CD8-positive, alpha-beta T cell (primary cell): ENCODE measurements at regions of chr16 and their contacts with region 1.

Region 1: DNA sequence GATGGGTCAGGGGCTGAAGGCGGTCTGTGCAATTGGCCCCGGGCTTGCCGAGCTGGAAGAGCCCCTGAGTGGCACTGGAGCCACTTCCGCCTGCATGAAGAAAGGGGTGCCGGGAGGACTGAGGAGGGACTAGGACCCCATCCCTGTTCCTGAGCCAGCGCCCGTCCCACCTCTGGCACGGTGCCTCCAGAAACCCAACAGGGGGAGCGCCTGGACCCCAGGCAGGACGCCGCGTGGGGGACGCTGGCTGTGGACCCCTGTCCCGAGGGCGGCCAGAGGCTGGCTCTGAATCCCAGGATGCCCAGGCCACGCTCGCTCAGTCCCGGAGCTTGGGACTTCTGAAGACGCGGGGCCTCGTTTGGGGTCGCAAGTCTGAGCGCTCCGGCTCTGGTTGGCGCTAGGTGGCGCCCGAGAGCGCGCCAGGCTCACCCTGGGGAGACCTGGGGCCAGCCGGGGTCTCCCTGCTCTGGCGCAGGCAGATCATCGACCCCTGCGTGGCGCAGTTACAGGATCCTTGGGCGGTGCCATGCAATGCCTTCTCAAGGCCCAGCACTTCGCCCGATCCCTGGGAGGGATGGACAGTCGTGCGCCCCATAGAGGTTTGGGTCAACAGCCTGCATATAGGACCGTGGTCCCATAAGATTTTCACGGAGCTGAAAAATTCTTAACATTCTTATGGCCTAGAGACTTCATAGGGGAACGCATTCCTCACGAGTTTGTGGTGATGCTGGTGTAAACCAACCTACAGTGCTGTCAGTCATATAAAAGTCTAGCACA is 58.5 kb upstream of the CREBBP start:
- DNase-seq: peak; percentile 33 to 83 (median 67)
- ATAC-seq: peak; percentile 91
- H3K4me3 ChIP-seq: peak overlapping the region; percentile 17 to 33
- H3K4me3 Mint-ChIP-seq: no peak overlapping the region
- H3K27ac ChIP-seq: no peak overlapping the region
- H3K27ac Mint-ChIP-seq: no peak overlapping the region
- H3K4me1 ChIP-seq: peaks cover 13% of the 10 kb centered on the region
- H3K4me1 Mint-ChIP-seq: peaks cover 4% of the 10 kb centered on the region
- H3K27me3 ChIP-seq: peaks cover 0 to 5% of the 10 kb centered on the region in 2 experiments
- H3K27me3 Mint-ChIP-seq: peaks cover 3% of the 10 kb centered on the region
- CTCF ChIP-seq: peak; percentile 87

Region 2: GRCh38 chr16:3822366-3823045 is 116.5 kb before region 1 on chr16:
- CTCF ChIA-PET with region 1: no interaction called
- POLR2A ChIA-PET with region 1: no interaction called
- intact Hi-C with region 1: no loop called
- DNase-seq: peak in 1 of 9 experiments; percentile 18
- ATAC-seq: no peak
- H3K4me3 ChIP-seq: peak overlapping the region in 1 of 2 experiments; percentile 17
- H3K4me3 Mint-ChIP-seq: peak overlapping the region; percentile 55
- H3K27ac ChIP-seq: no peak overlapping the region
- H3K27ac Mint-ChIP-seq: no peak overlapping the region
- H3K4me1 ChIP-seq: peaks cover 91% of the 10 kb centered on the region
- H3K4me1 Mint-ChIP-seq: peaks cover 96% of the 10 kb centered on the region
- H3K27me3 ChIP-seq: no peaks in the 10 kb centered on the region
- H3K27me3 Mint-ChIP-seq: no peaks in the 10 kb centered on the region
- CTCF ChIP-seq: no peak

Region 3: DNA sequence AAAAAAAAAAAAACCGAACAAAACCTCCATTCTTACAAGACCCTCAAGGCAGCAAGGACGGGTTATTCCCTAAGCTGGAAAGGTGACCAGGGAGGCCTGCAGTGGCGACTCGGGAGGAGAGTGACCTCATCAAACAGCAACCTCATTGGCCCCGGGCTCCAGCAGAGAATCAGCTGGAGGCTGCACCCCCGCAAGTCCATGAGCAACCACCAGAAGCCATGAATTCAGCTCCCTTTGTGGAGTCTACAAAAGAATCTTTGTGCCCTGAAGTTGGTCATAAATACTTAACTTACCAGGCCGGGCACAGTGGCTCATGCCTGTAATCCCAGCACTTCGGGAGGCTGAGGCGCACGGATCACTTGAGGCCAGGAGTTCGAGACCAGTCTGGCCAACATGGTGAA is 22.4 kb after region 1 on chr16:
- CTCF ChIA-PET with region 1: interaction called, 7 read pairs
- POLR2A ChIA-PET with region 1: no interaction called
- intact Hi-C with region 1: loop called in 1 of 2 experiments (anchors 1 kb)
- DNase-seq: no peak
- ATAC-seq: no peak
- H3K4me3 ChIP-seq: no peak overlapping the region
- H3K4me3 Mint-ChIP-seq: peak overlapping the region; percentile 83
- H3K27ac ChIP-seq: no peak overlapping the region
- H3K27ac Mint-ChIP-seq: no peak overlapping the region
- H3K4me1 ChIP-seq: peaks cover 18% of the 10 kb centered on the region
- H3K4me1 Mint-ChIP-seq: peaks cover 20% of the 10 kb centered on the region
- H3K27me3 ChIP-seq: peaks cover 0 to 4% of the 10 kb centered on the region in 2 experiments
- H3K27me3 Mint-ChIP-seq: peaks cover 10% of the 10 kb centered on the region
- CTCF ChIP-seq: no peak

Region 4: GRCh38 chr16:3983081-3983520 is 44.1 kb after region 1 on chr16:
- CTCF ChIA-PET with region 1: no interaction called
- POLR2A ChIA-PET with region 1: no interaction called
- intact Hi-C with region 1: loop called in 1 of 2 experiments (anchors 5 kb)
- DNase-seq: peak in 8 of 9 experiments; percentile 9 to 68 (median 48)
- ATAC-seq: peak; percentile 48
- H3K4me3 ChIP-seq: no peak overlapping the region
- H3K4me3 Mint-ChIP-seq: no peak overlapping the region
- H3K27ac ChIP-seq: no peak overlapping the region
- H3K27ac Mint-ChIP-seq: no peak overlapping the region
- H3K4me1 ChIP-seq: peaks cover 4% of the 10 kb centered on the region
- H3K4me1 Mint-ChIP-seq: peaks cover 4% of the 10 kb centered on the region
- H3K27me3 ChIP-seq: no peaks in the 10 kb centered on the region
- H3K27me3 Mint-ChIP-seq: no peaks in the 10 kb centered on the region
- CTCF ChIP-seq: peak; percentile 31

Region 5: DNA sequence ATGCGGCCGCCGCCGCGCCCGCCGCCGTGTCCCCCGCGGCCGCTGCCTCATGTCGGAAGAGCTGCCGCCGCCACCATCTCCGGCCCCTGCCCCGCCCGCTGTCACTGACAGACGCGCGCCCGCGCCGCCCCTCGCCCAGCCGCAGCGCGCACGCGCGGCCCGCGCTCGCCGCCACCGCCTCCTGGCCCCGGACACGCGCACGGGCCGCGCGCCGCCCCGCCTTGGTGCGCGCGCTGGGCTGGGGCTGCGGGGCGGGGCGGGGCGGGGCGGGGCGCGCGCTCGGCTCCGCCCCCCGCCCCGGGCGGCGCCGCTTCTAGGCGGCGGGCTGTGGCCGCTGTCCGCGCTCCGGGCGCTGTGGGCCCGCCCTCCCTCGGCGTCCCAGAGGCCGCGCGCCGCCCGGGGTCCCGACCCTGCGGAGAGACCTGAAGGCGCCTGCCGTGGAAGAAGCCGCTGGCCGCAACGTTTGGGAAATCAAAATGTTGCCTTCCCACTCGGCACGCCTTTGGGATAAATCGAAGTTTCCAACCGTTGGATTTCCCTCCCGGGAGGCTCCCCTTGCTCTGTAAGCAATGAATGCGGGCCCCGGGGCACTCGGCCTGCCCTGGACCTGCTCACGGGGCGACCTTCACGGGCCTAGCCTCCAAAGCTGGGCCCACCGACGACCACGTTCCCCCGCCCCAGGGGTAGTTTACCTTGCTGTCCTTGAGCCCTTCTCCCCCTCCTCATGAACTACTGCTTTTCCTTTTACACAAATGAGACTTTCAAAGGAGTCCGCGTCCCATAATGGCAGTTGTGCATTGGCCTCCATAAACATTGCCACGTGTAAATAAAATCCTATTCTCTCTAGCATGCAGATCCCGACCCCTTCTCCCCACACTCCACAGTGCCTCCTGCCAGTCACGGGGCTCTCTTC is 177.6 kb after region 1 on chr16 and contains the start of gene ADCY9:
- CTCF ChIA-PET with region 1: no interaction called
- POLR2A ChIA-PET with region 1: no interaction called
- intact Hi-C with region 1: loop called in 1 of 2 experiments (anchors 5 kb)
- DNase-seq: peak; percentile 31 to 92 (median 74)
- ATAC-seq: peak; percentile 77
- H3K4me3 ChIP-seq: peak within 1 kb of the TSS; percentile 55 to 64
- H3K4me3 Mint-ChIP-seq: peak within 1 kb of the TSS; percentile 87
- H3K27ac ChIP-seq: peak within 1 kb of the TSS in 1 of 2 experiments; percentile 39
- H3K27ac Mint-ChIP-seq: peak within 1 kb of the TSS; percentile 52
- H3K4me1 ChIP-seq: peaks cover 33% of the 10 kb centered on the region
- H3K4me1 Mint-ChIP-seq: peaks cover 40% of the 10 kb centered on the region
- H3K27me3 ChIP-seq: no peaks in the 10 kb centered on the region
- H3K27me3 Mint-ChIP-seq: peaks cover 3% of the 10 kb centered on the region
- CTCF ChIP-seq: no peak
- total RNA-seq, gene ADCY9: 4.2 to 4.3 TPM

Region 6: DNA sequence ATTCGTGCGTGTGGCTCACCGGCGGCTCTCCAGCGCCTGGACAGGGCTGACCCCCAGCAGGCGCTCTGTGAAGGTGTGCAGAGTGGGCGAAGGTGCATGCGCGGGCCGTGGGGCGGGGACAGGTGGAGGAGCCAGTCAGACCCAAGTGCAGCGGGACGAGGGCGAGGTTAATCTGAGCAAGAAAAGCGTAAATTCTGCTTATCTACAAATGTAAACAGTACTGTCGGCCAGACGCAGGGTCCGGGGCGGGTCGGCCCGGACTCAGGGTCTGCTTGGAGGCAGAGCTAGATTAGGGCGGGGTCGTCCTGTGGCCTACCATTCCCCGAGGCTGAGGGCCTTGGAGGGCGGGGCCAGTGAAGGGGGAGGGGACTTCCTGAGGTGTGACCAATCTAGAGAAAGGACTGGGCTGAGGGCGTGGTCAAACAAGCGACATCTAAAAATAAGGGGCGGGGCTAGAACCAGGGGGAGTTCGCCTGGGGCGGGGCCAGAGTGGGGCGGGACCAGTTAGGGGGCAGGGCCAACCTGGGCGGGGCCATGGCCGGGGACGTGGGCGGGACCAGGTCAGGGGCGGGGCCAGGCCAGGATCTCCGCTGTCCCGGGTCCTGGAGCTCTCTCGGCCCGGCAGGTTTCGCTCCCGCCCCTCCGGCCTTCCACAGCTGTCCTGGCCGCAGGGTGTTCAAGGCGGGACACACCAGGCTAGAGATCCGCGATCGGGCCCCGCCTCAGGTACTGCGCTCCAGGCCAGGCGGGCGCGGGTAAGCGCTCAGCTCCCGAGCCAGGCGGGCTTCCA is 1018.9 kb after region 1 on chr16 and contains the start of gene SEC14L5:
- CTCF ChIA-PET with region 1: no interaction called
- POLR2A ChIA-PET with region 1: no interaction called
- intact Hi-C with region 1: loop called in 1 of 2 experiments (anchors 5 kb)
- DNase-seq: peak; percentile 72 to 92 (median 87)
- ATAC-seq: peak; percentile 98
- H3K4me3 ChIP-seq: peak within 1 kb of the TSS; percentile 40 to 70
- H3K4me3 Mint-ChIP-seq: peak within 1 kb of the TSS; percentile 82
- H3K27ac ChIP-seq: no peak within 1 kb of the TSS
- H3K27ac Mint-ChIP-seq: no peak within 1 kb of the TSS
- H3K4me1 ChIP-seq: peaks cover 15% of the 10 kb centered on the region
- H3K4me1 Mint-ChIP-seq: peaks cover 20% of the 10 kb centered on the region
- H3K27me3 ChIP-seq: peaks cover 6 to 22% of the 10 kb centered on the region in 2 experiments
- H3K27me3 Mint-ChIP-seq: peaks cover 55% of the 10 kb centered on the region
- CTCF ChIP-seq: no peak
- total RNA-seq, gene SEC14L5: not detected